WTC11 (cell line): ENCODE measurements at regions of chr20 and their contacts with region 1.

Region 1: GRCh38 chr20:17682103-17682888 is at the start of gene RRBP1:
- DNase-seq: peak; percentile 99
- ATAC-seq: peak; percentile 96
- H3K4me3 Mint-ChIP-seq: peak within 1 kb of the TSS; percentile 80
- H3K27ac Mint-ChIP-seq: peak within 1 kb of the TSS; percentile 97
- H3K4me1 Mint-ChIP-seq: peaks cover 37% of the 10 kb centered on the region
- H3K27me3 Mint-ChIP-seq: peaks cover 11% of the 10 kb centered on the region
- CTCF ChIP-seq: peak; percentile 72
- total RNA-seq, gene RRBP1: 161 to 171 TPM (median 162 TPM) in 3 replicates

Region 2: DNA sequence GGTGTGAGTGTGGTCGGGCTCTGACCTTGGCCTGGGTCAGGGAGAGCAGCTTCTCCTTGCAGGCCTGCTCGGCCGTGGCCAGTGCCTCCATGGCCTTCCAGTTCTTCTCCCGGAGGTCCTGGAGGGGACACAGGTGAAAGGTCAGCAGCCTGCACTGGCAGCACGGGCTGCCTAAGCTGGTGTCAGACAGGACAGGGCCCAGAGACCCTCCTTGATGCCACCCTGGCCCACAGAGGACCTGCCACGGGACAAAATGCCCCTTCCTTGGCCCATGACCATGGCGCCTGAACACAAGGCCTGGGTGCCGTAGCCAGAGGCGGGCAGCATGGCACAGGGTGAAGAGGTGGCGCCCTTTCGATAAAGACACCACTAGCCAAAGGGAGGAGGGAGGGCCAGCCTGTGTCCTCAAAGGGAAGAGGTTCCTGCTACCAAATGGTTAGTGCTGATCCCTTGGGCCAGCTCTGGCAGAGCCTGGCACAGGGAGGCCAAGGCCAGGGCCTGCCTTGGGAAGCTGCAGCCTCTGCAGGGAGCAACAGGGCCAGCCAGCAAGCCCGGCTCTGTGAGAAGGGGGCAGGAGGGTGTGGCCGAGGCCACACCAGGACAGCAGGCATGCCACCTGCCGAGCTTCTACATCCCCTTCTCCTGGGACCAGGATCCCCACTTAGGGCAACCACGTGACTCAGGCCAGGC is 57.6 kb before region 1 on chr20:
- CTCF ChIA-PET with region 1: no interaction called
- POLR2A ChIA-PET with region 1: no interaction called
- DNase-seq: peak; percentile 5
- ATAC-seq: no peak
- H3K4me3 Mint-ChIP-seq: no peak overlapping the region
- H3K27ac Mint-ChIP-seq: no peak overlapping the region
- H3K4me1 Mint-ChIP-seq: no peaks in the 10 kb centered on the region
- H3K27me3 Mint-ChIP-seq: no peaks in the 10 kb centered on the region
- CTCF ChIP-seq: no peak

Region 3: GRCh38 chr20:17654649-17655285 is 27.5 kb before region 1 on chr20:
- CTCF ChIA-PET with region 1: interaction called, 15 read pairs
- POLR2A ChIA-PET with region 1: no interaction called
- DNase-seq: peak; percentile 80
- ATAC-seq: peak; percentile 47
- H3K4me3 Mint-ChIP-seq: no peak overlapping the region
- H3K27ac Mint-ChIP-seq: peak overlapping the region; percentile 82
- H3K4me1 Mint-ChIP-seq: peaks cover 61% of the 10 kb centered on the region
- H3K27me3 Mint-ChIP-seq: no peaks in the 10 kb centered on the region
- CTCF ChIP-seq: peak; percentile 77

Region 4: DNA sequence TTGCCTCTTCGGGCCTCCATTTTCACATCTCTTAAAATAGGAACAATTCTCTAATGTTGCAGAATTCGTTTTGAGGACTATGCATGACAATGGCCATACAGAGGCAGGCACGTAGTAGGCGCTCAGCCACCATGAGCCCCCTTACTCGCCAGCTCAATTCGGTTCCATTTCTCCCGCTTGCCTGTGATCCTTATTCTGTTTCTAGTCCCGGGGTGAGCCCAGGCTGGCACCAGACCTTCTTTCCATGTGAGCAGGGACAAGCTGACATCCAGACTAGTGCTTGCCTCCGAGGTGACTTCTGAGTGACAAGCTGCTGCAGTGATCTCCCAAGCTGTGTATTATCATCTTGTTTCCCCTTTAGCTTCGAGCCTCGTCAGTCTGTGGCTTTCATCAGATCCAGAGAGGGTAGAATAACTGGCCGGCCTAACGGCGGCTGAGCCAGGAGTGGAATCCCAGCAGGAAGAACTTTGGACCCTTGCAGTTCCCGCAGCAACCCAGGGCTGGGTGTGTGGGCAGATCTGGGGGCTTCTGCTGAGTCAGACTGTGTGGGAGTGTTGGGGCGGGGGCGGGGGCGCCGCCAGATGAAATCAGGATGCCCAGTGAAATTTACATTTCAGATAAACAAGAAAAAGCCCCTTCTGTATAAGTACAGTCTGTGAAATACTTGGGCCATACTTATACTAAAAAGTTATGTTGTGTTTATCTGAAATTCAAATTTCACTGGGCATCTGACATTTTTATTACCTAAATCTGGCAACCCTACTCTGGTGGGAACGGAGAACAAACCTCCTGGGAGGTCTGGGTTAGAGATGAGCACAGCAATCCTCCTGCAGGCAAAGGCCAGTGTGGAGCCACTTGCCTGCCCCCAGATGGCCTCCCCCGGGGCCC is 28.3 kb after region 1 on chr20:
- CTCF ChIA-PET with region 1: interaction called, 19 read pairs
- POLR2A ChIA-PET with region 1: interaction called, 10 read pairs
- DNase-seq: no peak
- ATAC-seq: peak; percentile 27
- H3K4me3 Mint-ChIP-seq: no peak overlapping the region
- H3K27ac Mint-ChIP-seq: no peak overlapping the region
- H3K4me1 Mint-ChIP-seq: peaks cover 17% of the 10 kb centered on the region
- H3K27me3 Mint-ChIP-seq: no peaks in the 10 kb centered on the region
- CTCF ChIP-seq: no peak

Region 5: GRCh38 chr20:17822039-17822438 is 139.7 kb after region 1 on chr20:
- CTCF ChIA-PET with region 1: interaction called, 11 read pairs
- POLR2A ChIA-PET with region 1: no interaction called
- DNase-seq: no peak
- ATAC-seq: no peak
- H3K4me3 Mint-ChIP-seq: no peak overlapping the region
- H3K27ac Mint-ChIP-seq: no peak overlapping the region
- H3K4me1 Mint-ChIP-seq: peaks cover 30% of the 10 kb centered on the region
- H3K27me3 Mint-ChIP-seq: no peaks in the 10 kb centered on the region
- CTCF ChIP-seq: no peak

Region 6: DNA sequence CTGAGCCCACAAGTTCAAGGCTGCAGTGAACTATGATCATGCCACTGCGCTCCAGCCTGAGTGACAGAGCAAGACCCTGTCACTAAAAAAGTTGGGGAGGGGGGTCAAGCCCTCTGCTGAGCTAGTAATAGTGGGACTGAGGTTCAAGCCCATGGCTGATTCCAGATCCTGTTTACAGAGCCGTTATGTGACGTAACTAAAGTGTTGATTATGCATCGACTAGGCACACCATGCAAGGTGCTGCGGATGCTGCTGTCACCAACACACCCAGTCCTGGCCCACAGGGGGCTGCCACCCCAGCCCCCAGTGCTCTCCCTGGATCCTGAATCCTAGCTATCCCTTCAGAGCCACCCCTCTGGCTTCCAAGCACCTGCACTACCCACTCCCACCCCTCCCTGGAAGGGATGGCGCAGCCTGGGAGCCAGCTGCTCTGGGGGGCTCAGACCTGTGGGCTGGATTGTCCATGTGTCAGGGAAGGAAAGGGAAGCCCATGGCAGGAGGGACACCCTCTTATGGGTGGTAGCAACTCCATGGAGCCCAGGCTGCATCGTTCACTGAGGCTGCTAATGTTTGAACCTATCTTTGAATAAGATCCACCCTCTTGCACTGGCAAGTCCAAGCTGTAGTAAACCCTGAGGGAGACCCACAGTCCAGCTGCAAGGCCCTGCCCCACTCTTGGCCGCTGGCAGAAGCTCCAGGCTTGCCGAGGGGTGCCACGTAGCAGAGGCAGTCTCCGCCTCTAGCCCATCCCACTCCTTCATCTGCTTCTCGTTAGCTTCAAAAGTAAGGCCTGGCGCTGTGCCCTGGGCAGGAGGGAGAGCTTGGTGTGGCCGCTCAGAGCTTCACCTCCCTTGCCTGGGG is 191.3 kb after region 1 on chr20:
- CTCF ChIA-PET with region 1: interaction called, 32 read pairs
- POLR2A ChIA-PET with region 1: interaction called, 6 read pairs
- DNase-seq: no peak
- ATAC-seq: peak; percentile 52
- H3K4me3 Mint-ChIP-seq: no peak overlapping the region; the same call in 1 of the 2 replicates
- H3K27ac Mint-ChIP-seq: no peak overlapping the region; the same call in 1 of the 2 replicates
- H3K4me1 Mint-ChIP-seq: peaks cover 78% of the 10 kb centered on the region
- H3K27me3 Mint-ChIP-seq: no peaks in the 10 kb centered on the region; the same call in 1 of the 2 replicates
- CTCF ChIP-seq: no peak

Region 7: GRCh38 chr20:17938871-17939619 is 256.7 kb after region 1 on chr20:
- CTCF ChIA-PET with region 1: interaction called, 51 read pairs
- POLR2A ChIA-PET with region 1: interaction called, 4 read pairs
- DNase-seq: peak; percentile 82
- ATAC-seq: peak; percentile 71
- H3K4me3 Mint-ChIP-seq: no peak overlapping the region
- H3K27ac Mint-ChIP-seq: peak overlapping the region; percentile 98
- H3K4me1 Mint-ChIP-seq: peaks cover 70% of the 10 kb centered on the region
- H3K27me3 Mint-ChIP-seq: no peaks in the 10 kb centered on the region; the same call in 1 of the 2 replicates
- CTCF ChIP-seq: peak; percentile 88